HEK293T (cell line): ENCODE measurements at regions of chr20 and their contacts with region 1.

Region 1: DNA sequence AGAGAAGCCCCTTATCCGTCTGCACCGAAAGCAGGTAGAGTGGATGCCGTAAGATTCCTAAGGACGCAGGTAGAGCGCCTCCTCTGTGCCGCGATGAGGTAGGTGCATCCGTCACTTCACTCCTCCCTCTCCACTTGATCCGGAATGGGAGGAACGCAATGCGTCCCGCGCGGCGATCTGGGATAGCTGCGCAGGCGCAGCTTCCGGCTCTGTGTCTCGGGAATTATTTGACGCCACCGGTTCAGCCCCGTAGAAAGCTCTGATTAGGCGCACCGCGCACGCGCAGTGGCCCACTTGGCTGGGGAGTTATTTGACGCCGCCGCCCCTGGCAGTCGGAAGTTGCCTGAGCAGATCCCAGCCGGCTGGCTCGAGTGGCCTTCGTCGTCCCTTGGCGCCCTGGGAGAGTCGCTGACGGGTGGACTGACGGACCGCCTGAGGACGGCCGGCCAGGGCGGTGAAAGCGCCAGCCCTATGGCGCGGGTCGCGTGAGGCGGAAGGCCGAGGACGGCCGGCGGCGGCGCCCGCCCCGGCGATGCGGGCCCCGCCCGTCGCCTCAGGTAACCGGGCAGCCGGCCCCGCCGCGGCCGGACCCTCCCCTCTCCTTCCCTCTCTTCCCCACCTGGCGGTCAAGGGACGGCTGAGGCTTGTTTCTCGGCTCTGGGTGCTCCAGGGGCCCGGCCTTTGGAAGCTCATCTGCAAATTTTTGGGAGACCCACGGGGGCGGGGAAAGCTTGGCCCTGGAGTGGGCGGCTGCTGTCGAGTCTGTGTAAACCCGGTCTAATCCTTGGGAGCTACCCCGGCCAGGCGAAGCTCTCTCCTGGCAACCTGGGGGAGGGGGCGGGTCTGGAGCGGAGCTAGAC is at the start of gene RALGAPB:
- DNase-seq: peak; percentile 96

Region 2: DNA sequence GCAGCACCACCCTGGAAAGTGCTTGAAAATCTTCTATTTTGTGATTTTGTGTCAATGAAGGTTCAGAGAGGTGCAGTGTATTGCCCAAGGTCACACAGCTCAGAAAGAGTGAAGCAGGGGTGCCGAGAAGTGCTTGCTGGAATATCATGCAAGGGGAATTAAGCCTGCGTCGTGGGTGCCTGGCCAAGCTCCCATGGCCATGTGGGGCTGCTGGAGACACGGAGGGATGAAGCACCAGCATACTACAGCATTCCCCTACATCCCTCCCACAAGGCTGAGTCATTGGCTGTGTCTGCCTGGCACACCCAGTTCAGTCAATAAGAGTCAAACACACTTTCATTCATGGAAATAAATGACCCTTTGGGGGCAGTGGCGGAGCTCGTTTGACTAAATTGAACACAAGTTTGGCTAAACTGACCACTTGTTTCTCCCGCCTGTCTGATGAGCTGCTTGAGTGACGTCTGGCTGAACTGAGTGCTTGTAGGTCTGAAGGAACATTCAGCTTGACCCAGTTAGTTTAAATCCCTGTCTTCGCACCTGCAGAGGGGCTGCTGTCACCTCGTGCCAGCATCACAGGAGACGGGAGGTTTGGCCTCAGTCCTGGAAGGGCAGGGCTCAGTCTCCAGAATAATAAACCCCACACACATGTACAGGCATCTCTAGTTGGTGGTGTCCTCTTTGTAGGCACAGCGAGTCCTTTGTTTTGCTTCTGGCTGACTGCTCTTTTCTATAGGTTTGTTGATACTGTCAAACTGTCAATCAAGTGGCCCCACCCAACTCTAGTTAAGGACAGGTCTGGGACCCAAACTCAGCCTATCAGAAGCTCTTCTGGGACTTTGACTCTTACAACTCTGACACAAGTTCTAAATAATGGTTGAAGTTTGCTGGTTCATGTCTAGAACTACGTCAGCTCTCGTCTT is 299.2 kb before region 1 on chr20:
- CTCF ChIA-PET with region 1: no interaction called
- POLR2A ChIA-PET with region 1: no interaction called
- DNase-seq: no peak

Region 3: DNA sequence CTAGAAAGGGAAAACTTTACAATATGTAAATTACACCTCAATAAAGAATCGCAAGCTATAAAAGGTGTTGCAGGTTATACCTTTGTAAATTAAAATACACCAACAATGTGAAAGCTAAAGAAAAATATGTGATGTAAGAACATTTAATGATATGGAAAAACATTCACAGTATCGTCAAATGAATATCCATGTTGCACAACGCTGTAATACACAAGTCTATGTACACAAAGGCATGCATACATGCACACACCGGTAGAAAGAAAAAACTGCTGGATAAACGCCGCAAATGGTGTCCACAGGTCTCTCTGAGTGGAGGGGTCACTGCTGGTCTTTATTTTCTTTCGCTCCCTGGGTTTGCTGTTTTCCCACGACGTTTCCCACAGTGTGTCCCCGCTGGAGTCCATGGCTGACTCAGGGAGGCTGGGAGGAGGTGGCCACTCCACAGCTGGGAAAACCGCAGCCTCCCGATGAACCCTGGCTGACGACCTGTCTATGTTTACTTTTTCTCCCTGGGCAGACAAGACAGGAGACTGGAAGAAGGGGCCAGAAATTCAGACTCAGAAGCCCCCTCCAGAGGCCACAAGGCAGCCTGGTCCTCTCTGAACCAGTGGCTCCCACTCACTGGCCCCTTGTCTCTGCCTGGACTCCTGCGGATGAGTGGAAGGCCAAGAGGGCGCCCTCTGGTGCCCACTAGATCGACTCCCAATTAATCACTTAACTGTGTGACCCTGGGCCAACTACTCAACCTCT is 181.7 kb before region 1 on chr20:
- CTCF ChIA-PET with region 1: no interaction called
- POLR2A ChIA-PET with region 1: no interaction called
- DNase-seq: peak; percentile 60

Region 4: DNA sequence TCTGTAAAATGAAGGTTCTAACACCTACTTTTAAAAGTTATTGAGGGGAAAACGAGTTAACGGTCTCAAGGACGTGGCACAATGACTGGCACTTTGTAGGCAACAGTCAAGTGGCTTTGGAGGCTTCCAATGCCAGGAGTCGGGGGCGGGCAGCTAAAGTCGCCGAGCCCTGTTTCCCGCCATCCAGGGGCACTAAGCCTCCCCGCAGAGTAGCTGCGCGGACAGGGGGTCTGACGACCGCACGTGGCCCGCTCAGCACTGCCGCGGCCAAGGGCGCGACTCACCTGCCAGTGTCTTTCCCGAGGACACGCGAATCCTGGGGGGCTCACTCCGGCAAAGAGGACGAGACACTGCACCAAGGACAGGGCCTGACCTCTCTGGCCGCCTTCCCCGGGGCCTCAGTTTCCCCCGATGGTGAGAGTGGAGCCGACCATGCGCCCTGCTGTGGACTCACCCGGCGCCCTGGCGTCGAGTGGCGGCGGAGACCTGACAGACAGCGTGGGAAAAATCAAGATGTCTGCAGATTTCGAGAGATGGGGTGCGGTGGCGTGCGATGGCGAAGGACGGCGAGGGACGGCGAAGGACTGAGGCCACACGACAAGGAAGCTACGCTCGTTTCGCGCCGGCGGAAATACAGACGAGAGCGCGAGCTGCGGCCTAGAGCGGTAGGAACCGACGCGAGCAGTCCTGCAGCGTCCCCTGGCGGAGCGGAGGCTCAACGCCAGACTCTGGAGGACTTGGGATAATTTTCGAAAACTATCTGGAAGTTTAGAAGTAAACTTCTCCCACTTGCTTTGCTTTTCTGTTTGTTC is 37.8 kb before region 1 on chr20 and contains the start of gene SNHG17:
- CTCF ChIA-PET with region 1: interaction called, 6 read pairs
- POLR2A ChIA-PET with region 1: interaction called, 67 read pairs
- DNase-seq: peak; percentile 88

Region 5: DNA sequence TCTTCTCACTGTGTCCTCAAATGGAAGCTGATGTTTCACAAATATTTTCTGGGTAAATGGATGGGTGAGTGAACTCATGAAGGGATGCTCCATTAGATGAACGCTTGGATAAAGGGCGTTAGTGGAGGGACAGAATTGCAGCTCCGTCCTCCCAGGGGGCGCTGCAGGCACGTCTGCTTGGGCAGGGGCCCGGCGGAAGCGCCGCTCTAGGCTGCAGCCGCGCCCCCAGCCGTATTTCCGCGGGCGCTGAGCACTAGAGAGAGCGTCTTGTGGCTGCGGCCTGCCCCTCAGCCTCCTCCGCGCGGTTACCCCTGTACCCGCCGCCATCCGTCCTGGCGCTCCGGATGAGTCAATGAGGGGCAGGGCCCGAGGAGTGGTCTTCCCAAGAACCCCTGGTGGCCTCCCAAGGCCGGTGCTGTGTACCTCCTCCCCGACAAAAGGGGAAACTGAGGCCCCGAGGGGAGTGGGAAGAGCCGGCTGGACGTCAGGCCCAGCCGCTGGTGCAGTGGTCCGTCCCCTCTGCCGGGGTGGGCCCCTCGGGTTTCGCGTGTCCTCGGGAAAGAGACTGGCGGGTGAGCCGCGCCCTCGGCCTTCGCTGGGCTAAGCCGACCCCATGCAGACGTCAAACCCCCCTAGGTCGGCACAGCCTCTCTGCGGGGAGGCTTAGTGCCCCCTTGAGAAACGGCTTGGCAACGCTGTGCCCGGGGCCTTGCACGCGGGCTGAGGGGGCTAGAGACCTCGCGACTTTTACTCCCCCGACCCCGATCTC is 26.1 kb before region 1 on chr20:
- CTCF ChIA-PET with region 1: interaction called, 5 read pairs
- POLR2A ChIA-PET with region 1: interaction called, 45 read pairs
- DNase-seq: peak; percentile 90

Region 6: DNA sequence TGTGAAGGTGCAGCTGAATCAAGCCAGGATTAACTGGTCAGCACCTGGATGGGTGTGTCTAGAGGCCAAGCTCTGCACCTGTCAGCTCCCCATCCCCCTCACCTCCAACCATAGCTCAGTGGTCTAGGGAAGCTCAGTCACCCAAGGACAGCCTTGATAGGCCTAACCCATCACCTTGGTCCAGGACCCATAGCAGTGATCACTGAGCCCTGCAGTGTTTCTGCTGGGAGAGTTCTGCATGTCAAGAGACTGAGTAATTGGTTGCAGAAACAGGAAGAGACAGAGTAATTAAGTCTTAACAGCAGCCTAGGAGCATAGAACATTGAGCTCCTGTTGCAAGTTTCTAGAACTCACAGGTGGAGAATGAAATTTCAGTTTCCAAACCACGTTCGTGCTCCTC is 18.8 kb before region 1 on chr20:
- CTCF ChIA-PET with region 1: interaction called, 3 read pairs
- POLR2A ChIA-PET with region 1: interaction called, 18 read pairs
- DNase-seq: no peak

Region 7: GRCh38 chr20:38485041-38485440 is 12.3 kb after region 1 on chr20:
- CTCF ChIA-PET with region 1: no interaction called
- POLR2A ChIA-PET with region 1: interaction called, 13 read pairs
- DNase-seq: no peak